GM18951 (cell line): ENCODE measurements at regions of chr10 and their contacts with region 1.

Region 1: DNA sequence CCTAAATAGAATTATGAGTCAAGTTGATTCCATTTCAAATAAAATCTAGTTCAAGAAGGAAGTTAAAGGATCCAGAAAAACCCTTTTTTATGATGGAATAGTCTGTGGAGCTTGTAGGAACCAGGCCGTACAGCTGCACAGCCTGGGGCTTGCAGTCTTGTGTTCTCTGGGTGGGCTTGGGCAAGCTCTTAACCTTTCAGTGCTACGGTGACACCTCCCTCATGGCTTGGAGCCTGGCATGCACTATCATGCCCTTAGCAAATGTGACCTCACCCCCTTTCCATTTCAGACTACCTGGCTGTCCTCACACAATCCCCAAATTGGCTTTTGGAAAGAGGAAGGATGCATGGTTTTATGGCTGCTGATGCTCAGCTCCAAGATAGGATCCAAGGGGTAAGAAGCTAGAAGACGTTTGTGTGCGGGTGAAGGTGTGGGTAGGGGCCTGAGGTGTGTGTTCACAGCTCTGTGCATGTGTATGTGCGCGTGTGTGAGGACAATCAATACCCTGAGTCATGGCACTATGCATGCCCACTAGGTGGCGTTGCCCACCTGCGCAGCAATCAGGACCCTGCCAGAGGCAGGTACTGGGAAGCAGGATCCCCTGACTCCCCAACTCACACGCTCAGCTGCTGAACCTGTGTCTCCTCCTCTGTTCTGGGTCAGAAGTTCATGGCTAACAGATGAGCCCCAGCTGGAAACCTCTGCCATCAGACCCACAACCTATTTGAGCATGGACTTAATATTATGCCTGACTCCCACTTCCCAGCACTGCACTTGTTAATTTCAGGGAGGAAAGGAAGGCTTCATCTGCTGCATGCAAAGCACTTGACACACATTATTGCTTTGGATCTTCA is 113.4 kb downstream of the PTPN20 start:
- POLR2A ChIP-seq: no peak

Region 2: DNA sequence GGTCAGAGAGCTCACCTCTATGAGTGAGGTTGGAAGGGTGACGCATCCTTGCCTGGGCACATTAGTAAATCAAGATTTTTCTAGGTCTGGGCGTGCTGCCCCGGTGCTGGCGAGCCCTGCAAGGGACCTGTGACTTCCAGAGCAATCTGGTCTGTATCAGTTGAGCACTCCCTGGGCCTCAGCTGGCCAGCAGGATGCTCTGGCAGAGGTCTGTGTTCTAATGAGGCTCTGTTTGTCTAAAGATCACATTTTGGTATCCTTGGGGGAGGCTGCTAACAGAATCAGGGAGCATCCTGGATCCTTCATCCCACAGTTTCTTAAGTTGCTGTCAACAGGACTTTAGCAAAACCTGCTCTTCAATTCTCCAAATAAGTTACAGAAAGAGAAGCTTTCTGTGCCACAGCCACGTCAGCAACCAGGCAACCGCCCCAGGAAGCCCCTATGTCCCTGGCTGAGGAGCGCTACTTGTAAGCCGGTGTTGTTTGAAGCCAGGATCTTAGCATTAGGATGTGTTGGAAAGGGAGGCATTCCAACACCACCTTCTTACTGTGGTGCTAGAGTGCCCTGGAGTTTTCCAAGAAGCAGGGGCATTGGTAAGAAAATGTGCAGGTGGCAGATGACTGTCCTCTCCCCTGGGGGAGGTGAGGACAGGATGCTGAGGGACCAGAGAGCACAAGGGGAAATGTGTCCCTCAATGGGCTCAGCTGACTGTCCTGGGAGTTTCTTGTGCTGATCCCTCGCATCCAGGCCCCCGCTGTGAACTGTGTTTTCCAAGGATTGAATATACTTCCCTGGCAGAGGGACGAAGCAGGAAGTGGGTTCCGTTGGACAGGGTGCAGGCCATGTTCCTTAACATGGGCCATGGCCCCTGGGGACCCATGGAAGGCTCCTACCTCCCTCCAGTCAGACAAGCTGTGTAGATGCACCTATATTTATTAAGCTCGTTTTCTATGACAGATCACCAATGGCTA is 135.6 kb after region 1 on chr10:
- in situ Hi-C with region 1: no loop called
- POLR2A ChIP-seq: no peak

Region 3: DNA sequence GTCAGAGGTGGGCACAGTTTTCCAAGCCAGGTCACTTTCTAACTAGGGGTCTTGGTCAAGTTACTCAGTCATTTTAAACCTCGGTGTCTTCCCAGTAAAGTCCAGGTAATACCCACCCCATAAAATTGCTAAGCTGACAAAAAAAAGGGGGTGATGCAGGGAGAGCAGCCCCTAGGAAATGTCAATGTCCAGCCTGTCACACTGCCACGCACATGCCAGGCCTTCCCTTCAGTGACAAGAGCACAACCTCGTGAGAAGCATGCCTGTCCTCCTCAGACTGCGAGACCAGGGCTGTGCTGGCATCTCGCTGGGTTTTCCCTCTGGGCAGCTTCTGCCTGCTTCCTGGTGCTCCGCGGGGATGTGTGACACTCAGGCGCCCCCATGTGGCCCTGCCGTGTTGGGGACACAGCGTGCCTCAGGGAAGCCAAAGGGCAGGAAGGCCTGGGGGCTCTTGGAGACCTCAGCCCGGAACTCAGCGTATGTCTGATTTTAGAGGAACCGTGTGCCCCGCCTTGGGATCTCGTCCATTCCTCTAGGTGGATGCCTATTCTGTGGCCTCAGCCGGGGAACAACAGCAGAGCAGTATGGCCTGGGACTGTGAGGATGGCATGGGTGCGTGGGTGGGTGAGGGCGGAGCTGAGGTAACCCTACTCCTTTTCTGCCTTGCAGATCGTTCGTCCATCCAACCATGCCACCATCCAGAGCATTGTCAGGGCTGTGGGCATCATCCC is 287.5 kb after region 1 on chr10:
- in situ Hi-C with region 1: loop called (anchors 25 kb)
- POLR2A ChIP-seq: no peak

Region 4: GRCh38 chr10:47449102-47449979 is 424.7 kb after region 1 on chr10:
- in situ Hi-C with region 1: loop called (anchors 10 kb)
- POLR2A ChIP-seq: no peak